Mammary epithelial cell (primary cell): ENCODE measurements at regions of chr11 and their contacts with region 1.

Region 1: GRCh38 chr11:116641561-116642045 is 131.2 kb downstream of the BUD13 start:
- DNase-seq: peak; percentile 14
- H3K4me3 ChIP-seq: no peak overlapping the region
- H3K27ac ChIP-seq: no peak overlapping the region
- H3K4me1 ChIP-seq: no peaks in the 10 kb centered on the region
- H3K27me3 ChIP-seq: no peaks in the 10 kb centered on the region
- CTCF ChIP-seq: peak; percentile 87 to 95

Region 2: DNA sequence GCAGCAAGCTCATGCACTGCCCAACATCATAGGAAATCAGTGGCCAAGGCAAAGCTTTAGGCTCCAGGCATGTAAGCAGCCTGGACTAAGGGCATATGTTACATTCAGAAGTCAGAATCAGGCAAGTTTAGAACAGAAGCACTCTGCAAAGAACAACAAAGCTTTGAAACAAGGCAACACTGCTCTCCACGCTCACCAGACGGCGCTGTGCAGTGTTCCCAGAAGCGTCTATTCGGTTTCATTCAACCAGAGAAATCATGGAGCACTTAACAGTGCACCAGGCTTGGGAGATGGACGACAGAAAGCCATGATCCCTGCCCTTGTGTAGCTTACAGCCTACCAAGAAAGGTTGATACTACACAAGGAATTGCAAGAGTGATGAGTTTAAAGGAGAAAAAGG is 424.6 kb before region 1 on chr11:
- CTCF ChIA-PET with region 1: no interaction called
- dilution Hi-C with region 1: no loop called
- in situ Hi-C with region 1: no loop called
- intact Hi-C with region 1: loop called (anchors 1 kb)
- DNase-seq: peak; percentile 8
- H3K4me3 ChIP-seq: no peak overlapping the region
- H3K27ac ChIP-seq: no peak overlapping the region
- H3K4me1 ChIP-seq: no peaks in the 10 kb centered on the region
- H3K27me3 ChIP-seq: peaks cover 3% of the 10 kb centered on the region
- CTCF ChIP-seq: peak; percentile 88 to 89

Region 3: GRCh38 chr11:116454020-116454645 is 187.5 kb before region 1 on chr11:
- CTCF ChIA-PET with region 1: no interaction called
- dilution Hi-C with region 1: no loop called
- in situ Hi-C with region 1: loop called in 1 of 2 experiments (anchors 25 kb)
- intact Hi-C with region 1: loop called (anchors 1 kb)
- DNase-seq: peak; percentile 17
- H3K4me3 ChIP-seq: no peak overlapping the region
- H3K27ac ChIP-seq: no peak overlapping the region
- H3K4me1 ChIP-seq: no peaks in the 10 kb centered on the region
- H3K27me3 ChIP-seq: no peaks in the 10 kb centered on the region
- CTCF ChIP-seq: peak; percentile 64 to 79

Region 4: GRCh38 chr11:116535994-116536393 is 105.6 kb before region 1 on chr11:
- CTCF ChIA-PET with region 1: no interaction called
- dilution Hi-C with region 1: loop called (anchors 5 kb)
- in situ Hi-C with region 1: no loop called
- intact Hi-C with region 1: no loop called
- DNase-seq: no peak
- H3K4me3 ChIP-seq: no peak overlapping the region
- H3K27ac ChIP-seq: no peak overlapping the region
- H3K4me1 ChIP-seq: no peaks in the 10 kb centered on the region
- H3K27me3 ChIP-seq: peaks cover 3% of the 10 kb centered on the region
- CTCF ChIP-seq: no peak

Region 5: DNA sequence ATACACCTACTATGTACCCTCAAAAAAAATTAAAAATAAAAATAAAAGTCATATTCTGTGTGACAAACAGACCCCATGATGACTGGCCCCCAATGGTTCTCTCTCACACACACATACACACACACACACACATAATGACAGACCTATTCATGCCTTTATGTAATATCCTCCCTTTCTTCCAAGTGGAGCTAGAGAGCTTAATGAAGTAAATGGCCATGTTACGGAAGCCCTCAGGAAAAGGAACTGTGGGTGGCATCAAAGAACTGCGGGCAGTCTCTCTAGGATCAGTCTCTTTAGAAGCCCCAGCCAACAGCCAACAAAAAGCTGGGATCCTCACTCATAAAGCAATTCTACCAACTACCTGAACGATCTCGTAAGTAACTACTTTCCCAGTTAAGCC is 331.1 kb after region 1 on chr11:
- CTCF ChIA-PET with region 1: no interaction called
- dilution Hi-C with region 1: no loop called
- in situ Hi-C with region 1: no loop called
- intact Hi-C with region 1: no loop called
- DNase-seq: no peak
- H3K4me3 ChIP-seq: no peak overlapping the region
- H3K27ac ChIP-seq: no peak overlapping the region
- H3K4me1 ChIP-seq: peaks cover 5% of the 10 kb centered on the region
- H3K27me3 ChIP-seq: no peaks in the 10 kb centered on the region
- CTCF ChIP-seq: peak in 1 of 2 donors; percentile 43